ENCODE measurements at regions of chr1 and their contacts with region 1.

Region 1: GRCh38 chr1:204904228-204904810 is 33.7 kb downstream of the NFASC start:
- DNase-seq: no peak
- ATAC-seq: no peak
- H3K4me3 ChIP-seq: no peak overlapping the region
- H3K27ac ChIP-seq: peak overlapping the region in 1 of 12 donors; percentile 1
- H3K4me1 ChIP-seq: peaks cover 0 to 3% (median 0%) of the 10 kb centered on the region in 12 donors
- H3K27me3 ChIP-seq: peaks cover 0 to 9% (median 0%) of the 10 kb centered on the region in 9 donors
- CTCF ChIP-seq: no peak
- POLR2A ChIP-seq: no peak

Region 2: DNA sequence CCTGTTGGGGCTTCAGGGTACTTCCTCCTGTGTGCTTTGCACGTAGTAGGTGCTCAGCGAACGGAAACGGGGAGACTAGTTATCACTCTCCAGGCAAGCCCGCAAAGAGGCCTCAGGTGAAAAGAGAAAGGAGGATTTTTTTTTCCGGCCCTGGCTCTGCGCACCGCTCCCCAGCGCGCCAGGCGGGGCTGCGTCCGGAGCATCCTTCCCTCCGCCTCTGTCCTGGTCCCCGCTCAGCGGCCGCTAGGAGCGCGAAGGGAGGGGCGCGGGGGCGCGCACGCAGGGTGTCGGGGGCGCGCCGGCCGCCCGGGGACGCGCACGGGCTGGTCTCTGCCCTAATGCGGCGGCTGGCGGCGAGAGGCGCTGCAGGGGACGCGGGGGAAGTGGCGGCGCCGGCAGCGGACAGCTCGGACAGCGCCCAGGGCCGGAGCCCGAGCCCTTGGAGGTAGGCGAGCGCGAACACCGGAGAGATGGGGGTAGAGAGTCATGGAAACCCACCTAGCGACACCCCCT is 75.9 kb before region 1 on chr1:
- intact Hi-C with region 1: no loop called
- DNase-seq: peak; percentile 76 to 85 (median 78)
- ATAC-seq: peak; percentile 87 to 98 (median 94)
- H3K4me3 ChIP-seq: peak overlapping the region; percentile 38 to 72 (median 56)
- H3K27ac ChIP-seq: peak overlapping the region in 6 of 12 donors; percentile 18 to 63 (median 46)
- H3K4me1 ChIP-seq: peaks cover 0 to 20% (median 6%) of the 10 kb centered on the region in 12 donors
- H3K27me3 ChIP-seq: peaks cover 0 to 13% (median 0%) of the 10 kb centered on the region in 9 donors
- CTCF ChIP-seq: peak in 8 of 12 donors; percentile 17 to 48 (median 33)
- POLR2A ChIP-seq: no peak

Region 3: DNA sequence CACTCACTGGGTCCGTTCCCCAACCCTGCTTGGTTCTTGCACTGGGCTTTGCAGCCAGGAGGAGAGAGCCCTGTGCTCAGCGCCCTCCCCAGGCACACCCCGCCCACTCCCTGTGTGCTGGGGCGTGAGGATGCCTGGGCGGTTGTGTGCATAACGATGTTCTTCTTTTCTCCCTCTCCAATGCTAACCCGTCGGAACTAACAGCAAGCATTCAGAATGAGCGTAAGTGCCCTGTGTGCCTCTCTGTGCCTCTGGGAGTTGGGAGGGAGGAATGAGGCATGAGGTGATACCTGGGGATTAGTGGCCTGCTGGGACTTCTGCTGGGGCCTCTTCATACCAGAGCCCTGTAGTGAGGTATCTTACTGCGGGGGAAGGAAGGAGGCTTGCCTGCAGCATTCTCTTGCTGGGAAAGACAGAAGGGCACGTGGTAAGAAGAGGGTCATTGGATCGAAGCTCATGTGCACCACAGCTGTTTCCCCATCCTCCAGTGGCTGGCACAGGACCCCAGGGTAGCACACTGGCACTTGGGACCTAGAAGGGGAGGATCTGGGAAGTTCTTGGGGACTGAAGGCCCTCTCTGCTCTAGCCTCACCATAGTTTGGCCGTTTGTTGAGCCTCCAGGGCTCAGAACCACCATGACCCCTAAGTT is 46.2 kb after region 1 on chr1:
- intact Hi-C with region 1: loop called in 1 of 10 experiments (anchors 2 kb)
- DNase-seq: no peak
- ATAC-seq: no peak
- H3K4me3 ChIP-seq: no peak overlapping the region
- H3K27ac ChIP-seq: no peak overlapping the region
- H3K4me1 ChIP-seq: peaks cover 0 to 7% (median 0%) of the 10 kb centered on the region in 12 donors
- H3K27me3 ChIP-seq: no peaks in the 10 kb centered on the region
- CTCF ChIP-seq: no peak
- POLR2A ChIP-seq: no peak

Region 4: DNA sequence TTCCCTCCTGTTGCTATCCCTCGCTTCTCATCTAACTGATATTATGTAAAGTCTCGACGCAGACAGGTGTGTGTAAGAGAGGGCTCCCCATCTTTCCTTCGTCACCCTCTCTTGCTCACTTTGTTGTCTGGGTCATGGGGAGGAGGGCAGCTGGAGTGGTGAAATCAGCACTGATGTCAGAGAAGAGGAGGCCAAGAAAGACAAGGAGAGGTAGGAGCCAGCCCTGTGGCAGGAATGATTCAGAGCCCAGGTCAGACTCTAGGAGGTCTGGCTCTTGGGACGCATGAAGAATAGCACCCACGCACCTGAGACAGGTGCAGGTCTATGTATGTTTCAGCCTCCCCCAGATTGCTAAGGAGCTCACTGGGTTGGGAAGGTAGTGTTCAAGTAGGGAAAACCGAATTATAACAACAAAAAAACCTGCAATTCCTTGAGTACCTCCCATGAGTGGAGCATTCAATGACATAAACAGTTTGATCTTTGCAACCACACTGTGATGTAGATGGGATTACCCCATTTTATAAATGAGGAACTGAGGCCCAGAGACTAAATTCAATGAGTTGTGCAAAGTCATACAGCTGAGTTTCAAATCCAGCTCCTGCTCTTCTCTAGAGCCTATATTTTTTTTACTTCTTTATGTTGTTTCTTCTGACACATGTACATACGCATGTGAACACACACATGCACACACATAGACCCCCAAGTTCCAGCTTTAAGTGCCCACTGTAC is 406.8 kb after region 1 on chr1:
- intact Hi-C with region 1: no loop called
- DNase-seq: no peak
- ATAC-seq: no peak
- H3K4me3 ChIP-seq: no peak overlapping the region
- H3K27ac ChIP-seq: peak overlapping the region in 1 of 12 donors; percentile 64
- H3K4me1 ChIP-seq: peaks cover 0 to 57% (median 17%) of the 10 kb centered on the region in 12 donors
- H3K27me3 ChIP-seq: no peaks in the 10 kb centered on the region
- CTCF ChIP-seq: no peak
- POLR2A ChIP-seq: no peak

Measured in heart left ventricle (tissue), 16 donors.